ENCODE measurements at regions of chr1 and their contacts with region 1.

Region 1: DNA sequence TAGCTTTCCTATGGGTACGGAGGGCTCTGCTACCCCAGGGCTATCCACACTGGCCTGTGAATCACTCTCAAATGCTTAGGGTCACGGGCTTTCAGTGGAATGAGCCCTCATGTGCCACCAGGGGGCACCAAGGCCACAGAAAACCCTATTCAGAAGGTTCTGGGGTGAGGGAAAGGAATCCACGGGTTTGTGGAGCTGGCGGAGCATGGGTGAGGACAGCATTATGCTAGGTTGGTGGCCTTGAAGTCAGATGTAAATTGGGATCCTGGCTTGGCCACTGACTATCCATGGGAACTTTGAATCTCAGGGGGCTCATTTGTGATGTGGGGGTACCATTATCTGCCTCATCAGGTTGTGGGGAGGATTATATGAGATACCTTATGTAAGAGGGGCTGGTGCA is 5.1 kb upstream of the LAMTOR5 start:
- DNase-seq: peak in 1 of 2 experiments; percentile 79
- H3K4me3 ChIP-seq: no peak overlapping the region
- H3K27ac ChIP-seq: no peak overlapping the region
- H3K4me1 ChIP-seq: peaks cover 0 to 4% (median 0%) of the 10 kb centered on the region in 4 experiments; a peak in 4 of 7 replicates
- H3K27me3 ChIP-seq: 0 out of 7 replicates have a peak, but pooled peaks cover 0 to 3% (median 0%) of the 10 kb centered on the region in 4 experiments
- CTCF ChIP-seq: peak; percentile 76 to 89 (median 89)
- EP300 ChIP-seq: no peak
- POLR2A ChIP-seq: no peak
- RAD21 ChIP-seq: peak; percentile 88 to 97

Region 2: GRCh38 chr1:110482662-110483307 is 70.2 kb after region 1 on chr1:
- CTCF ChIA-PET with region 1: interaction called, 19 read pairs
- POLR2A ChIA-PET with region 1: no interaction called
- DNase-seq: no peak
- H3K4me3 ChIP-seq: no peak overlapping the region
- H3K27ac ChIP-seq: no peak overlapping the region
- H3K4me1 ChIP-seq: peaks cover 6 to 14% (median 10%) of the 10 kb centered on the region in 4 experiments
- H3K27me3 ChIP-seq: no peaks in the 10 kb centered on the region; a peak in 2 of 7 replicates
- CTCF ChIP-seq: peak; percentile 13 to 31 (median 28); a peak in 3 of 4 replicates
- EP300 ChIP-seq: no peak
- POLR2A ChIP-seq: no peak
- RAD21 ChIP-seq: no peak

Region 3: GRCh38 chr1:110746579-110747160 is 334.1 kb after region 1 on chr1:
- CTCF ChIA-PET with region 1: no interaction called
- POLR2A ChIA-PET with region 1: no interaction called
- DNase-seq: peak; percentile 19 to 75
- H3K4me3 ChIP-seq: no peak overlapping the region
- H3K27ac ChIP-seq: no peak overlapping the region
- H3K4me1 ChIP-seq: peaks cover 0 to 17% (median 8%) of the 10 kb centered on the region in 4 experiments; a peak in 5 of 7 replicates
- H3K27me3 ChIP-seq: peaks cover 0 to 1% (median 0%) of the 10 kb centered on the region in 4 experiments; a peak in 2 of 7 replicates
- CTCF ChIP-seq: no peak
- EP300 ChIP-seq: no peak
- POLR2A ChIP-seq: no peak
- RAD21 ChIP-seq: no peak